BJ (cell line): ENCODE measurements at regions of chr6 and their contacts with region 1.

Region 1: GRCh38 chr6:29834564-29835436 is 7.2 kb downstream of the HLA-G start:
- DNase-seq: no peak
- H3K4me3 ChIP-seq: no peak overlapping the region
- H3K27me3 ChIP-seq: peaks cover 11% of the 10 kb centered on the region
- CTCF ChIP-seq: peak; percentile 86

Region 2: DNA sequence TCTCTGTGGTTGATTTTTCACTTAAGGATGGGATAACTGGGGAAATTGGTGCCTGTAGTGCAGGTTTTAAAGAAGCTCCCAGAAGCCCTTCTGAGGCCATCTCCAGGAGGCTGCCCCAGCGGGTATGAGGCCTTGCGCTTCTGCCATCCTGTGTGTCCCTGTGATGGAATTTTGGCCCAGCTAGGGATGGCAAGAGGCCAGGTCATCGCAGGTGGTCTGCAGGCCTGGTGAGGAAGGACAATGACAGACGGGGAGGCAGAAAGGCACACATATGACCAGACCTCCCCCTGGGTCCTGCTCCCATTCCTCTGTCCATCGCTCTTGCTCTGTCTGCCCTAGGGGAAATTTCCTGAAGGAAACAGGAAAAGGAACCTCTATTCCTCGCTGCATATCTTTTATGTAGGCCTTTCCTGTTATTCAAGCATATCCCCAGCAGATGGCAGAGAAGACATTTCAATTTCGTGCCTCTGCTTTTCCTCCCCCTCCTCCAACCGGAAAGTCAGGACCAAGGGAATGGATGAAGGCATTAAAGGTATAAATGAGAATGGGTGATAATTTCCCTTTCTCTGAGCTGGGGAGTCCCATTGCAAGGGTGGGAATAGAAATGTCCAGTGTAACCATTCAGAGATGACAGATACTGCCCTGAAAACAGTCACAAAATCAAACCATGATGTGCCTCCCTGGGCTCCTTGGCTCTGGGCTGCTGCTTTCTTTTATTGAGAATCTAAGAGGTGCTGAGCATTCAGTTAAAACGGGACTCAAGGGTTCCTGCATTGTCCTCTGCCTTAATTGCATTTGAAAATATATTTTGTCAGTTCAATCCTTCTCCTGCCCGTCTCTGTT is 129.2 kb before region 1 on chr6:
- CTCF ChIA-PET with region 1: interaction called, 25 read pairs
- POLR2A ChIA-PET with region 1: no interaction called
- DNase-seq: no peak
- H3K4me3 ChIP-seq: no peak overlapping the region
- H3K27me3 ChIP-seq: peaks cover 9% of the 10 kb centered on the region
- CTCF ChIP-seq: peak; percentile 63

Region 3: GRCh38 chr6:29853243-29853642 is 18.4 kb after region 1 on chr6:
- CTCF ChIA-PET with region 1: interaction called, 10 read pairs
- POLR2A ChIA-PET with region 1: no interaction called
- DNase-seq: no peak
- H3K4me3 ChIP-seq: no peak overlapping the region
- H3K27me3 ChIP-seq: peaks cover 22% of the 10 kb centered on the region
- CTCF ChIP-seq: no peak

Region 4: DNA sequence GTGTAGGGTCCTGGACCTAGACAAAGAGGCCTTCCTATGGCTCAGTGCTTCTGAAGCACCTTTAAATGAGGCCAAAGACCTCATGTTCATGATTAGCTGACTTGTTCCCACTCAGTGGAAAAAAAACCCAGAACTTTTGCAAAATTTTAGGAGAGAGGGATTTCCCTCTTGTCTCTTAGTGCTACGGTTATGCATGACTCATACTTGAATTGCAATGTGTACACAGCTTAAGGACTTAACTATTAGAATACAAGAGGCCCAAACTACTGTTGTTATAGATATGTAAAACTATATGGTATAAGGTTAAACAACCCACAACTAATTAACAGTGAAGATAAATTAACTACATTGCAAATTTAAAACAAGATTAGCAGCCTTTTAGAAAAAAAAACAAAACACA is 75.2 kb after region 1 on chr6:
- CTCF ChIA-PET with region 1: no interaction called
- POLR2A ChIA-PET with region 1: no interaction called
- DNase-seq: no peak
- H3K4me3 ChIP-seq: no peak overlapping the region
- H3K27me3 ChIP-seq: peaks cover 5% of the 10 kb centered on the region
- CTCF ChIP-seq: no peak